Common myeloid progenitor, CD34-positive (primary cell): ENCODE measurements at regions of chr22 and their contacts with region 1.

Region 1: DNA sequence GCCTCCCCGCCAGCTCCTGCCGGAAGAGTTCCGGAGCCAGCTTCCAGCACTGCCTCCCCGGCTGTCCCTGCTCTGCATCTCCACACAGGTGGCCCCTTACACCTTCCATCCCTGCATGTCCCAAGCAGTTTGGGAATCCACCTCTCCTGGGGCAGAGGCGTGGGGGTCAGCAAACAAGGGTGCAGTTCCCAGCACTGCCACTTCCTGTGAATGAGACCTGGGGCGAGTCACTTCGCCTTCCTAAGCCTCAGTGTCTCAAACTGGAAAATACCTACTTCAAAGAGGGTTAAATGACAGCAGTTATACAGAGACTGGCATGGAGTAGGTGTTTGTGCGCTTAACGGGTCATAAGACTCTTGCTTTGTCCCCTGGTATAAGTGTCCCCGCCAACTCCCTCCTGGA is 5.2 kb downstream of the CYTH4 start:
- DNase-seq: no peak
- H3K4me3 ChIP-seq: no peak overlapping the region
- H3K27ac ChIP-seq: no peak overlapping the region
- H3K4me1 ChIP-seq: peaks cover 13 to 61% (median 37%) of the 10 kb centered on the region in 4 experiments
- H3K27me3 ChIP-seq: no peaks in the 10 kb centered on the region

Region 2: GRCh38 chr22:37303821-37304274 is 16.3 kb after region 1 on chr22:
- CTCF ChIA-PET with region 1: interaction called, 12 read pairs
- POLR2A ChIA-PET with region 1: interaction called, 4 read pairs
- DNase-seq: peak in 2 of 3 donors; percentile 85 to 87
- H3K4me3 ChIP-seq: no peak overlapping the region
- H3K27ac ChIP-seq: peak overlapping the region in 1 of 2 experiments; percentile 46
- H3K4me1 ChIP-seq: peaks cover 29 to 98% (median 96%) of the 10 kb centered on the region in 4 experiments
- H3K27me3 ChIP-seq: no peaks in the 10 kb centered on the region

Region 3: DNA sequence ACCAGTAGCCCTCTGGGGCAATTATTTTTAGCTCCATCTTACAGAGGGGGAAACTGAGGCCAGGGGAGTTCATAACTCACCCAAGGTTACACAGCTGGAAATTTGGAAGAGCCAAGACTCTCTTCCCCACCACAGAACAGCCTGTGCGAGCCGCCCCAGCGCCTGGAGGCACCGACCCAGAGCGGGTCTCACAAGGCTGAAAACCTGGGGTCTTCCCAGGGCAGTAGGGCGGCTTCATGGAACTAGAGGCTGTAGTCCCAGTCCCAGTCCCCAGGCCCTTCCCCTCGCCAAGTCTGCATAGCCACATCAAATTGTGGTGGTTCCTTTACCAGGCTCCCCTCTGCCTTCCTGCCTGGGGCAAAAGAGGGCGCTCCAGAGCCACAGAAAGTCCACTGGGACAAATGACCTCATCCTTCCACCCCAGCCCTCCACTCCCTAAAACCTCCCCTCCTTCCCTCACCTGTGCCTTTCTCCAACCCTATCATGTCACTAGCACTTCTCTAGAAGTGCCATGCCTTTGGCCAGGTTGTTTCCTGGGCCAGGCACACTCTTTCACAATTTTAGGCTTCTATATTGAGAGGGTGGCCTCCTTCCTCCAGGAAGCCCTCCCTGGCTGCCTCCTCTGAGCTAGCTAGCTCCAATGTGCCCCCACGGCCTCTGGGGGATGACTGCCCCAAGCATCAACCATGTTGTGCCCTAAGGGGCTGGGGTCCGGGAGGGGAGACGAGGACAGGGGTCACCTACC is 257.6 kb after region 1 on chr22:
- CTCF ChIA-PET with region 1: no interaction called
- POLR2A ChIA-PET with region 1: no interaction called
- DNase-seq: peak; percentile 54 to 69 (median 61)
- H3K4me3 ChIP-seq: no peak overlapping the region
- H3K27ac ChIP-seq: no peak overlapping the region
- H3K4me1 ChIP-seq: peaks cover 0 to 25% (median 22%) of the 10 kb centered on the region in 4 experiments
- H3K27me3 ChIP-seq: peaks cover 0 to 26% (median 9%) of the 10 kb centered on the region in 5 experiments